ENCODE measurements at regions of chr13 and their contacts with region 1.

Region 1: DNA sequence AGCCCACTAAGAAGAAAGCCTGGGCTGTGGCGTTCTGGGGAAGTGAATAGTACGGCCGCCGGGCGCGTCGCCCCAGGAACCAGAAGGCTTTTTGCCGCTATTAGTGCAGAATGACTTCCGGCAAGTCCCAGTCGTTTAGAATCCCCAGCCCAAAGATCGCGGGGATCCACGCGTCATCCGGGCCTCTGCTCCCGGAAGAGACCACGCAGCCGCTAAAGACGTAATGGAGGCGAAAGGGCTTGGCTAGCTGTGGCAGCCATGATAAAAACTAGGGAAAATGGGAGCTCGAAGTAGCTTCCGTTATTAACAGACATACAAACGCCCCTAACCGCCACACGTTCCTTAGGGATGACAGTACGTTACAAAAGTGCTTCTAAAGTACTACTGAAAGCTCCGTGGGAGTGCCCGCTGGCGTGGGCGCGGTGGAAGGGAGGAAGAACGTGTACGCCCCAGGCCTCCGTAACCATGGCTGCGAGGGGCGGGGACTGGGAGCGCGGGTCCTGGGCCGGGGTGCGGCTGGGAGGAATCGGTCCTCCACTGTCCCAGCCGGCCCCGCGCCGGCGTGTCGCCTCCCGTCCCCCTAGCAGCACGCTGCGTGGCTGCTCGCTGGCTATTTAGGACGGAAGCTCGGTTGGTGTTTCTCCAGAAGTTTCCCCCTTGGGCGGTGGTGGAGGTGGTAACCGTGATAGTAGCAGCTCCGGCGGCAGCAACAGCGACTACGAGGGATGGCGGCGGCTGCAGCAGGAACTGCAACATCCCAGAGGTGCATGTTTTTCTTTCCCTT is at the start of gene SUGT1:
- DNase-seq: peak; percentile 98
- H3K4me3 Mint-ChIP-seq: no peak within 1 kb of the TSS
- H3K27ac Mint-ChIP-seq: no peak within 1 kb of the TSS
- H3K4me1 Mint-ChIP-seq: no peaks in the 10 kb centered on the region
- H3K27me3 Mint-ChIP-seq: no peaks in the 10 kb centered on the region
- CTCF ChIP-seq: peak; percentile 36
- total RNA-seq, gene SUGT1: 49.0 and 58.4 TPM in 2 replicates

Region 2: GRCh38 chr13:52599848-52600603 is 52.4 kb before region 1 on chr13:
- CTCF ChIA-PET with region 1: interaction called, 4 read pairs
- POLR2A ChIA-PET with region 1: interaction called, 33 read pairs
- intact Hi-C with region 1: loop called (anchors 1 kb)
- DNase-seq: peak; percentile 44
- H3K4me3 Mint-ChIP-seq: peak overlapping the region; percentile 78
- H3K27ac Mint-ChIP-seq: peak overlapping the region; percentile 96
- H3K4me1 Mint-ChIP-seq: peaks cover 17% of the 10 kb centered on the region
- H3K27me3 Mint-ChIP-seq: no peaks in the 10 kb centered on the region
- CTCF ChIP-seq: no peak

Region 3: GRCh38 chr13:52617070-52618060 is 35.0 kb before region 1 on chr13:
- CTCF ChIA-PET with region 1: interaction called, 21 read pairs
- POLR2A ChIA-PET with region 1: interaction called, 109 read pairs
- intact Hi-C with region 1: loop called (anchors 1 kb)
- DNase-seq: peak; percentile 85
- H3K4me3 Mint-ChIP-seq: peak overlapping the region; percentile 98
- H3K27ac Mint-ChIP-seq: peak overlapping the region; percentile 88
- H3K4me1 Mint-ChIP-seq: peaks cover 11% of the 10 kb centered on the region
- H3K27me3 Mint-ChIP-seq: no peaks in the 10 kb centered on the region
- CTCF ChIP-seq: no peak

Region 4: DNA sequence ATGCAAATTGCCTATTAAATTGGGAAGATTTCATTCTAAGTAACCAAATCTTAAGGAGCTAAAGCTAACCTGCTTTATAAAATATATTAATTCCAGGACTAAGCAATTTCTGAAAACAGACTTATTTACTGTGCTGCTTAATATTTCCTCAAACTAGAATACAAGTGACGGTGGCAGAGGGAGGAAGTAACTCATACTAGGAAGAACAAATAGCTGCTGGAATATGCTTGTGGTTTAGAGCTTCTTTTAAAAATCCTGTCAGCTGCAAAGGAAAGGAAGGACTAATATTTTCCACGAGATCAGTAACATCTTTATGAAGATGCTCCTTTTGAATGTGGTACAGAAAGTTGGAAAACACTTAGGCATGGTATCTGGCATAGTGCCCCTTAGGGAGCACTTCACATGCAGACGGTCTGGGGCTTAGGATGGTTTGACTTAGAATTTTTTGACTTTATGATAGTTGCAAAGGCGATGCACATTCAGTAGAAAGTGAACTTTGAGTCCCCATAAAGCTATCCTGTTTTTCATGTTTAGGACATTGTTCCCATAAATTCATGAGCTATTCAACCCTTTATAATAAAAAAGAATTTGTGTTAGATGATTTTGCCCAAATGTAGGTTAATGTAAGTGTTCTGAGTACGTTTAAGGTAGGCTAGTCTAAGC is 13.6 kb before region 1 on chr13:
- CTCF ChIA-PET with region 1: interaction called, 10 read pairs
- POLR2A ChIA-PET with region 1: interaction called, 8 read pairs
- intact Hi-C with region 1: no loop called
- DNase-seq: no peak
- H3K4me3 Mint-ChIP-seq: no peak overlapping the region
- H3K27ac Mint-ChIP-seq: no peak overlapping the region
- H3K4me1 Mint-ChIP-seq: no peaks in the 10 kb centered on the region
- H3K27me3 Mint-ChIP-seq: no peaks in the 10 kb centered on the region
- CTCF ChIP-seq: no peak

Region 5: DNA sequence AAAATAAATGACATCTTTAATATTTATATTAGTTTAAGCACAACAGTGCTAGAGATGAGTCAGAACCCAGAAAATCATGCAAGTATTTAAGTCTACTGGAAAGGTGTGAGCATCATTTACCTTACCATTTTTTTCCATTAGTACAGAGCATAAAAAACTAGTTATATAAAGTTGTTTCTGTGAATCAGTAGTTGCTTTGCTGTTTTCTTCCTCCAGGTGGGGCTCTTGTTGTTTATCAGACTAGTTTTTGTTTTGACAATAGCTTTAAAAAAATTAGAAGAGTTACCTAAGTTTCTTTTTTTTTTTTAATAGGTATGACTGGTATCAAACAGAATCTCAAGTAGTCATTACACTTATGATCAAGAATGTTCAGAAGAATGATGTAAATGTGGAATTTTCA is 12.9 kb after region 1 on chr13:
- CTCF ChIA-PET with region 1: interaction called, 20 read pairs
- POLR2A ChIA-PET with region 1: interaction called, 35 read pairs
- intact Hi-C with region 1: no loop called
- DNase-seq: peak; percentile 30
- H3K4me3 Mint-ChIP-seq: no peak overlapping the region
- H3K27ac Mint-ChIP-seq: no peak overlapping the region
- H3K4me1 Mint-ChIP-seq: peaks cover 6% of the 10 kb centered on the region
- H3K27me3 Mint-ChIP-seq: no peaks in the 10 kb centered on the region
- CTCF ChIP-seq: peak; percentile 42

Region 6: DNA sequence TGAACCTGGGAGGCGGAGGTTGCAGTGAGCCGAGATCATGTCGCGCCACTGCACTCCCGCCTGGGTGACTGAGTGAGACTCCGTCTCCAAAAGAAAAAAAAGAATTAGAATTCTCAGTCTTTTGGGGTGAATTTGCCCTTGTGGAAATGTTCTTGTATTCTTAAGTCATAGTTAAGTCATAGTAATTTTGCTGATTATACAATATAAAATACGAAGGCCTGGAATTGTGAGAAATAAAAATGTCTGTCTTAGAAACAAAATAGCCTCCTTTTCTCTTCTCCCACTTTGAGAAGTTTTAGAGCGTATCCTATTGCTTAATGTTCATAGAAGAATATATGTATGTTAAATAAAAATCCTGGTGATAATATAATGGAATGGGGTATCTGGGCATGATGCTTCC is 18.3 kb after region 1 on chr13:
- CTCF ChIA-PET with region 1: interaction called, 20 read pairs
- POLR2A ChIA-PET with region 1: interaction called, 35 read pairs
- intact Hi-C with region 1: no loop called
- DNase-seq: no peak
- H3K4me3 Mint-ChIP-seq: no peak overlapping the region
- H3K27ac Mint-ChIP-seq: peak overlapping the region; percentile 27
- H3K4me1 Mint-ChIP-seq: peaks cover 6% of the 10 kb centered on the region
- H3K27me3 Mint-ChIP-seq: no peaks in the 10 kb centered on the region
- CTCF ChIP-seq: no peak

Region 7: DNA sequence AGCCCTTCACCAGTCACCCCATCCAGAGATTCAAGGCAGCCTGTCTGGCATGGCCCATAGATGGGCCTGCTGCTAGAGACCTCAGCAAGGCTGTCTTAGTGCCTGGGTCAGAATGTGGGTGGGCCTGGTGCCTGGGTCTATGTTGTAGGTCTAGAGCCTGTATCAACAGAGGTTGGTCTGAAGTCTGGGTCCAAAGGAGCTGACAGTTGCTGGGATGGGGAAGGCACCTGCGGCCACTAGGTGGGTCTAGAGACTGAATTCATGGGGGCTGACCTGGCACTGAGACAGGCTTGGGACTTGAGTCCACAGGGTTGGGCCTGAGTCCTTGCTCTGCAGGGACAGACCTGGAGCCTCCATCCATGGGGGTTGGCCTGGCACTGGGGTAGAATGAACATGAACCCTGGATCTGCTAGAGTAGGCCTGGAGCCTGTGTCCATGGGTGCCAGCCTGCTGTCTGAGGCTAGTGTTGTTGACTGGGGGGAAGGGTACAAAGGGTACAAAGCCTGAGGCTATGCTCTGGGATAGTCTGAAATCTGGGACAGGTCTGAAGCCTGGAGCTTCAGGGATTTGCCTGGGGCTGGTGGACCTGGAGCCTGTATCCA is 893.1 kb after region 1 on chr13:
- CTCF ChIA-PET with region 1: no interaction called
- POLR2A ChIA-PET with region 1: no interaction called
- intact Hi-C with region 1: no loop called
- DNase-seq: no peak
- H3K4me3 Mint-ChIP-seq: no peak overlapping the region
- H3K27ac Mint-ChIP-seq: no peak overlapping the region
- H3K4me1 Mint-ChIP-seq: no peaks in the 10 kb centered on the region
- H3K27me3 Mint-ChIP-seq: no peaks in the 10 kb centered on the region
- CTCF ChIP-seq: no peak